Heart left ventricle (tissue), 16 donors: ENCODE measurements at regions of chr15 and their contacts with region 1.

Region 1: DNA sequence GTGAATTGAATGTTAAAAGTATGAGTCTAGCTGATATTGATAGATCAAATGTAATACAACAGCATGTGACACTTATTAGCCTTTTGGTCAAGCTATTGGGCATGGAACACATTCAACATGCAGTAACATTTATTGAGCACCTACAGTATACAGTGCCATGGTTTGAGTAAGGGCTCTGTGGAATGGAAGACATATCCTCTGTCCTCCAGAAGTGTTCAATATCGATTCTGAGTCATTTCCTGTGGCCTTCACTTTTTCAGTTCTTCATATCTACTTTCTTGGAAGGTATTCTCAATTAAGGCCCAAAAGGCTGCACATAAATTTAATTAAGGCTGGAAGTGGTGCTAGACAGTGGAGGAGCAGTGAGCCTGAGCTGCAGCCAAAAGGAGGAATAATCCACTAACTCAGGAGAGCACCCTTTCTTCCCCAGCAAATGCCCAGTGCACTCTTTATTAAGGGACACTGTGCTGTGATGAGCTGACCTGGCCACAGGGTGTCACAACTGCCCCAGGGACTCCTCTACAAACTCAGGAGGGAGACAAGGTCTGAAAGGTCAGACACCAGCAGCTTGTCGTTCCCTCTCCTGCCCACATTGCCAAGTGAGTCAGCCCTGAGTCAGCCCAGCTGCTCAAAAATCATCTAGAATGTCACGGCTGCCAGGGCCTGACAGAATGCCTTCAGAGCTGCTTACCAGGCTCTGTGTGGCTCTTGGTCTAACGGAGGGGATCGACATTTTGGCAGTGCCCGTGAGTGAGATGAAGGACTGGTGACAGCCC is 544.8 kb downstream of the AGBL1 start:
- DNase-seq: peak; percentile 74 to 92 (median 82)
- ATAC-seq: peak; percentile 96 to 100 (median 100)
- H3K4me3 ChIP-seq: no peak overlapping the region
- H3K27ac ChIP-seq: peak overlapping the region in 5 of 12 donors; percentile 10 to 63 (median 44)
- H3K4me1 ChIP-seq: peaks cover 0 to 6% (median 1%) of the 10 kb centered on the region in 12 donors
- H3K27me3 ChIP-seq: no peaks in the 10 kb centered on the region
- CTCF ChIP-seq: peak; percentile 19 to 68 (median 54)
- POLR2A ChIP-seq: no peak

Region 2: GRCh38 chr15:86677278-86677677 is 52.8 kb after region 1 on chr15:
- intact Hi-C with region 1: no loop called
- DNase-seq: no peak
- ATAC-seq: no peak
- H3K4me3 ChIP-seq: no peak overlapping the region
- H3K27ac ChIP-seq: no peak overlapping the region
- H3K4me1 ChIP-seq: no peaks in the 10 kb centered on the region
- H3K27me3 ChIP-seq: no peaks in the 10 kb centered on the region
- CTCF ChIP-seq: no peak
- POLR2A ChIP-seq: no peak

Region 3: DNA sequence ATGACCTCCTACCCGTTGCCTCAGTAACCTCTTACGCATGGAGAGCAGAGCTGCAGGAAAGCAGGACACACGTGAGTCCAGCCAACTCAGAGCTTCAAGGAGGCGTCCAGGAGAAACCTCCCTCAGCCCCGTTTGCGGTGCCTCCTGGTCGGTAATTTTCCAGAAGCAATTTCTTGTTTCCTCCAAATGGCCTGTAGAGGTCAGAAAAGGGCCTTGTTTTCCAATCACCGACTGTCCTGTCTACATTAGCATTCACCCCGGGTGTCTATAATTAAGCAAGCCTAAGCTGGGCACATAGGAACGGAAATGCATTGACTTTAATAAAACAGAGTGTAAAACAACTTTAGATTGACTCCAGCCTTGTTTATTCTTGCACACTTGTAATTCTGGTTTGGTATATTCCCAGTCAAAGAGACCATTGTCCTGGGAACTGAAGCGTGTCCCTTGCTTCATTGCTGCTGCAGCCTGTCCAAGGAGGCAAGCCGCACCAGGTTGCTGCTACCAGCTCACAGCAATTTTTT is 291.4 kb after region 1 on chr15:
- intact Hi-C with region 1: loop called in 2 of 10 experiments (anchors 5 to 10 kb)
- DNase-seq: peak in 2 of 5 donors; percentile 21 to 33
- ATAC-seq: peak; percentile 66 to 81 (median 72)
- H3K4me3 ChIP-seq: no peak overlapping the region
- H3K27ac ChIP-seq: peak overlapping the region in 3 of 12 donors; percentile 68 to 78 (median 69)
- H3K4me1 ChIP-seq: peaks cover 0 to 34% (median 13%) of the 10 kb centered on the region in 12 donors
- H3K27me3 ChIP-seq: no peaks in the 10 kb centered on the region
- CTCF ChIP-seq: peak; percentile 17 to 68 (median 52)
- POLR2A ChIP-seq: no peak

Region 4: GRCh38 chr15:87672309-87673288 is 1048.2 kb after region 1 on chr15:
- intact Hi-C with region 1: loop called in 1 of 10 experiments (anchors 10 kb)
- DNase-seq: peak in 1 of 5 donors; percentile 8
- ATAC-seq: peak in 1 of 4 donors; percentile 29
- H3K4me3 ChIP-seq: no peak overlapping the region
- H3K27ac ChIP-seq: no peak overlapping the region
- H3K4me1 ChIP-seq: peaks cover 0 to 5% (median 0%) of the 10 kb centered on the region in 12 donors
- H3K27me3 ChIP-seq: no peaks in the 10 kb centered on the region
- CTCF ChIP-seq: peak; percentile 40 to 72 (median 58)
- POLR2A ChIP-seq: no peak

Region 5: DNA sequence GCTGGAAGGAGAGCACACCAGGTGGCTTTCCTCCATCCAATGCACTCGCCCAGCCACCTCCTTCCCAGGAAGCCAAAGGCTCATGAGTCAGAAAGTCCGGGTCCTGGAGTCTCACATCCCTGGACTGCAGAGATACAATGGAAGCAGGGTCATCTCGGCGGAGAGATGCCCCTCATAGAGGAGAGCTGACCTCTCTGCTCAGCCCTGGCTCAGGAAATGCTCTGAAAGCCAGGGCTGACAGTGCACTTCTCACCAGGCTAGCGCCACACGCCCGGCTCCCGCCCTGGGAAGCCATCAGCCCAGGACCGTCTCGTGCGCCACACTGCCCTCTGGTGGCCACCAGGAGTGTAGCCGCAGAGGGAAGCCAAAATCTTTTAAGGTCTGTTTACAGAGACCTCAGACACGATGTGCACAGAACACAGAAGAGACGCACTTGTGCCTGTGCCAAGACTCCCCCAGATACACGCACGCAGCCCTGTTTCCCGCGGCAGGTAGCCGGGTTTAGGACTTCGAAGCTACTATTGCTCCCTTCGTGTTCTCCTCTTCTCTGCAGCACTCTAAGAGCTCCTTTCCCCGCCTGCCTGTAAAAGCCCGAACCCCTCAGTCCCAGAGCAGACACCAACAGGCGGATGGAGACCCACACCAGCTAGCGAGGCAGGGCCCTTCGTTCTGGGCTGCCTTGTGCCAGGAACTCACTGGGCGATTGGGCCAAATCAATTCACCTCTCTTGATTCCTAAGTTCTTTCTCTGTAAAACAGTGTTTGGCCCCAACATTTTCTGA is 1622.4 kb after region 1 on chr15:
- intact Hi-C with region 1: loop called in 4 of 10 experiments (anchors 10 kb)
- DNase-seq: peak; percentile 56 to 87 (median 76)
- ATAC-seq: peak; percentile 44 to 89 (median 82)
- H3K4me3 ChIP-seq: peak overlapping the region in 3 of 12 donors; percentile 17 to 25 (median 23)
- H3K27ac ChIP-seq: no peak overlapping the region
- H3K4me1 ChIP-seq: peaks cover 0 to 23% (median 4%) of the 10 kb centered on the region in 12 donors
- H3K27me3 ChIP-seq: peaks cover 0 to 6% (median 0%) of the 10 kb centered on the region in 9 donors
- CTCF ChIP-seq: peak; percentile 93 to 99 (median 96)
- POLR2A ChIP-seq: no peak

Region 6: DNA sequence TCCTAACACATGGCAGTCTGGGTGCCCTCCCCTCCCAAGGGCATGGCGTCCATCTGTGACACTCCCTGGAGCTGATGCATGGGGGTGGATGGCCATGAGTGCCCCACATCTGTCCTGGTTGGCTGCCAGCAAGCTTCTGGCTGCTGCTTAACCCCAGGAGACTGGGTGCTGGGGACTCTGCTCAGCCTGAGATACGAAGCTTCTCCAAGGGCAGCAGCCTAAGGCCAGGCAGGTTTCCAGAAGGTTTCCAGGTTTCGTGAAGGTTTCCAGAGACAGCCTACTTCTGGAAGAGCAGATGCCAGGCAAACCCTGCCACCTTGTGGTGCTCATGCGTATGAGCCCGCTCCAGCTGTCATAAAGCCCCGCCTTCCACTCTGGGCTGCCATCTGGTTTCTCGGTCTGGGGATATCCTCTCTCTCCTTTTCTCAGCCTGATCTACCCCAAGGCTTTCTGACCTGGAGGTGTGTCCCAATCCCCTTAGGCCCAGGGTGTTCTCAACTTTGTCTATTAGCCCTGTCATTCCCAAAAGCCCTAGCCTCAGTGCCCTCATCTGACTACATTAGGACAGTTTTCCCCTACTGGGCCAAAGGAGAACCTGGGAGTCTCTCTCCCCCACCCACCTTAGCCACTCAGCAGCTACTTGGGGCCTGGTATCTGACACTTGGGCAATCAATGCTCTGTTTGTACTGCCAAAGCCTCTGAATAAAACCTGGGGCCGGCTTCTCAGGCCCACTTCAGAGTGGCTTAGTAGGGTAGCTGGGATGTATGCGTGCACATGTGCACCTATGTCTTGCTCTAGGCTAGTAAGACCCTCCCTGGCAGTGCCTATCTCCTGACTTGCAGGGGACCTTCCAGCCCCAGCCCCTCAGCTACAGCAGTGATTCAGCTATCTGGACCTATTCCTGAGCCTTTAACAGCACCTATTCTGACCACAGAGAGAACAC is 1830.7 kb after region 1 on chr15:
- intact Hi-C with region 1: loop called in 2 of 10 experiments (anchors 10 kb)
- DNase-seq: peak in 4 of 5 donors; percentile 32 to 65 (median 42)
- ATAC-seq: peak; percentile 26 to 83 (median 80)
- H3K4me3 ChIP-seq: no peak overlapping the region
- H3K27ac ChIP-seq: peak overlapping the region in 3 of 12 donors; percentile 1 to 23 (median 2)
- H3K4me1 ChIP-seq: peaks cover 0 to 16% (median 7%) of the 10 kb centered on the region in 12 donors
- H3K27me3 ChIP-seq: no peaks in the 10 kb centered on the region
- CTCF ChIP-seq: peak; percentile 44 to 74 (median 56)
- POLR2A ChIP-seq: no peak